Transverse colon (tissue), 4 donors: ENCODE measurements at regions of chr3 and their contacts with region 1.

Region 1: GRCh38 chr3:38496131-38496910 is at the start of gene EXOG:
- DNase-seq: peak; percentile 96
- H3K4me3 ChIP-seq: peak within 1 kb of the TSS; percentile 69 to 89 (median 80)
- H3K27ac ChIP-seq: peak within 1 kb of the TSS; percentile 81 to 90 (median 88)
- H3K4me1 ChIP-seq: peaks cover 0 to 9% (median 7%) of the 10 kb centered on the region in 4 donors
- H3K27me3 ChIP-seq: no peaks in the 10 kb centered on the region
- CTCF ChIP-seq: peak; percentile 66 to 90 (median 86)
- EP300 ChIP-seq: no peak
- POLR2A ChIP-seq: peak; percentile 32
- total RNA-seq, gene EXOG: 6.0 to 15.3 (median 10.8) TPM

Region 2: GRCh38 chr3:38117748-38118420 is 378.4 kb before region 1 on chr3:
- in situ Hi-C with region 1: loop called in 1 of 4 experiments (anchors 25 kb)
- intact Hi-C with region 1: no loop called
- DNase-seq: peak; percentile 76
- H3K4me3 ChIP-seq: no peak overlapping the region
- H3K27ac ChIP-seq: no peak overlapping the region
- H3K4me1 ChIP-seq: no peaks in the 10 kb centered on the region
- H3K27me3 ChIP-seq: no peaks in the 10 kb centered on the region
- CTCF ChIP-seq: peak; percentile 62 to 89 (median 75)
- EP300 ChIP-seq: no peak
- POLR2A ChIP-seq: peak; percentile 19

Region 3: GRCh38 chr3:38136777-38137614 is 359.3 kb before region 1 on chr3 and contains the start of gene ACAA1:
- in situ Hi-C with region 1: loop called in 1 of 4 experiments (anchors 25 kb)
- intact Hi-C with region 1: no loop called
- DNase-seq: peak; percentile 100
- H3K4me3 ChIP-seq: peak within 1 kb of the TSS; percentile 62 to 99 (median 89)
- H3K27ac ChIP-seq: peak within 1 kb of the TSS; percentile 92 to 97 (median 95)
- H3K4me1 ChIP-seq: peaks cover 35 to 61% (median 52%) of the 10 kb centered on the region in 4 donors
- H3K27me3 ChIP-seq: no peaks in the 10 kb centered on the region
- CTCF ChIP-seq: no peak
- EP300 ChIP-seq: no peak
- POLR2A ChIP-seq: peak; percentile 97
- total RNA-seq, gene ACAA1: 123 to 278 (median 204) TPM

Region 4: GRCh38 chr3:38453075-38453912 is 43.0 kb before region 1 on chr3 and contains the start of gene ACVR2B:
- in situ Hi-C with region 1: no loop called
- intact Hi-C with region 1: loop called (anchors 1 kb)
- DNase-seq: peak; percentile 92
- H3K4me3 ChIP-seq: peak within 1 kb of the TSS; percentile 57 to 72 (median 65)
- H3K27ac ChIP-seq: peak within 1 kb of the TSS; percentile 88 to 94 (median 92)
- H3K4me1 ChIP-seq: peaks cover 7 to 37% (median 24%) of the 10 kb centered on the region in 4 donors
- H3K27me3 ChIP-seq: no peaks in the 10 kb centered on the region
- CTCF ChIP-seq: no peak
- EP300 ChIP-seq: no peak
- POLR2A ChIP-seq: peak; percentile 12
- total RNA-seq, gene ACVR2B: 5.9 to 12.3 (median 8.7) TPM